ENCODE measurements at regions of chr17 and their contacts with region 1.

Region 1: GRCh38 chr17:60036796-60037612 is 41.7 kb downstream of the HEATR6 start:
- DNase-seq: peak; percentile 73
- H3K4me3 ChIP-seq: no peak overlapping the region
- H3K27ac ChIP-seq: no peak overlapping the region
- H3K4me1 ChIP-seq: peaks cover 0 to 10% (median 2%) of the 10 kb centered on the region in 4 donors
- H3K27me3 ChIP-seq: peaks cover 22% of the 10 kb centered on the region
- CTCF ChIP-seq: peak; percentile 78 to 93 (median 86)
- EP300 ChIP-seq: no peak
- POLR2A ChIP-seq: no peak

Region 2: DNA sequence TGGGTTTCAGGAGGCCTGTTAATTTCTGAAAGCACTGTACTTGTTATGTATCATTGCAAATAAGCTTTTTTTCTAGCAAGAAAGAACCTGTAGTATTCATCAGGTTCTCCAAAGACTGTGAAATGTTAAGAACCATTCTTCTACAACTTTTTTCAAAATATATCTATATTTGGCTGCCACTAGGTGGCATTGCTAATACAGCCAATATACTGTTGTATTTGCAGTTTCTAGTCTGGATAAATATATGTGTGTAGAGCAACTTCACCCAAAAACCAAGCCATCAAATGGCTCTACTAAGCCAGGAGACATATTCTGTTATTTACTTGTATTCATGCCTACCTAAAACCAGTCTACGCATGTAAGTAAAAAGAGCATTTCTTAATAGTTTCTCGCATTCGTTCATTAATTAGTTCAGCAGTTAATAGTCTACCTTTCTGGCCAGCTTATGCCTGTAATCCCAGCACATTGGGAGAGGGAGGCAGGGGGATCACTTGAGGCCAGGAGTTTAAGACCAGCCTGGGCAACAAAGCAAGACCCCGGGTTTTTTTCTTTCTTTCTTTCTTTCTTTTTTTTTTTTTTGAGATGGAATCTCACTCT is 290.1 kb before region 1 on chr17:
- in situ Hi-C with region 1: loop called in 2 of 4 experiments (anchors 25 kb)
- intact Hi-C with region 1: no loop called
- DNase-seq: no peak
- H3K4me3 ChIP-seq: no peak overlapping the region
- H3K27ac ChIP-seq: no peak overlapping the region
- H3K4me1 ChIP-seq: peaks cover 0 to 6% (median 0%) of the 10 kb centered on the region in 4 donors
- H3K27me3 ChIP-seq: no peaks in the 10 kb centered on the region
- CTCF ChIP-seq: peak; percentile 49 to 62 (median 57)
- EP300 ChIP-seq: no peak
- POLR2A ChIP-seq: no peak

Measured in transverse colon (tissue), 4 donors.